Heart left ventricle (tissue), 16 donors: ENCODE measurements at regions of chr15 and their contacts with region 1.

Region 1: GRCh38 chr15:45118131-45118588 is 4.0 kb downstream of the DUOXA2 start:
- DNase-seq: peak; percentile 83 to 89 (median 87)
- ATAC-seq: peak; percentile 94 to 99 (median 96)
- H3K4me3 ChIP-seq: peak overlapping the region in 10 of 12 donors; percentile 2 to 49 (median 30)
- H3K27ac ChIP-seq: no peak overlapping the region
- H3K4me1 ChIP-seq: peaks cover 0 to 29% (median 15%) of the 10 kb centered on the region in 12 donors
- H3K27me3 ChIP-seq: peaks cover 30 to 92% (median 54%) of the 10 kb centered on the region in 9 donors
- CTCF ChIP-seq: peak; percentile 87 to 100 (median 97)
- POLR2A ChIP-seq: no peak

Region 2: DNA sequence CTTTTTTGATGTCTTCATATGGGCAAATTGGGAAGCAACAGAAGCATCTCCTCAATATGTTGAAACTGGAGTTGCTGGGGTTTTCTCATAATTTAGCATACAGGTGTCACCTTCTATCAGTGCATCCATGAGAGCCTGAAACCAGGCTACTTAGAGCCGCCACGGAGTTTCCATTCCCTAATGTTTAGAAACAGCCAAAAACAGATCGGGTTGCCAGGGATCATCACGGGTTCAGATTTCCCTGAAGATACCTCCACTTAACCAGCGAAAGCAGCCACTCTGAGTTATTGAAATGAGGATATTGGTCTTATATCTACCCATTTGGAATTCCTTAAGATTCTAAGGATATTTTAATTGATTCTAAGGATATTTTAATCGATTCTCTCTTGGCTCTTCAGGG is 147.1 kb before region 1 on chr15:
- intact Hi-C with region 1: loop called in 5 of 10 experiments (anchors 5 to 10 kb)
- DNase-seq: no peak
- ATAC-seq: no peak
- H3K4me3 ChIP-seq: no peak overlapping the region
- H3K27ac ChIP-seq: no peak overlapping the region
- H3K4me1 ChIP-seq: no peaks in the 10 kb centered on the region
- H3K27me3 ChIP-seq: peaks cover 0 to 10% (median 0%) of the 10 kb centered on the region in 9 donors
- CTCF ChIP-seq: no peak
- POLR2A ChIP-seq: no peak

Region 3: DNA sequence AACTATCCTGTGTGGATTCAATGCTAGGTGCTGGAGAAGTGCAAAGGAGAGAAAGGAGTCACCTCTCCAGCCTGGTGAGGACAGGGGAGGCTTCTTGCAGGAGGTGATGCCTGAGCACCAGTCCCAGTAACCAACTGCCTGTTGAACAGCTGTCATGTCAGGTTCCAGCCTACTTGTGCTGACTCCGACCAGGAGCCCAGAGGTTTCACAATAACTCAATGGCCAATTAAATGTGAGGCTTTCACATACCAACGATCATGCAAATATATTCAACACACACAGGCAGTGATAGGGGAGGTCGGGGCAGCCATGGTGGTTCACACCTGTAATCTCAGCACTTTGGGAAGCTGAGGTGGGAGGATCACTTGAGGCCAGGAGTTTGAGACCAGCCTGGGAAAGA is 87.4 kb before region 1 on chr15:
- intact Hi-C with region 1: loop called in 2 of 10 experiments (anchors 5 to 10 kb)
- DNase-seq: no peak
- ATAC-seq: no peak
- H3K4me3 ChIP-seq: no peak overlapping the region
- H3K27ac ChIP-seq: no peak overlapping the region
- H3K4me1 ChIP-seq: peaks cover 0 to 9% (median 0%) of the 10 kb centered on the region in 12 donors
- H3K27me3 ChIP-seq: no peaks in the 10 kb centered on the region
- CTCF ChIP-seq: no peak
- POLR2A ChIP-seq: no peak

Region 4: DNA sequence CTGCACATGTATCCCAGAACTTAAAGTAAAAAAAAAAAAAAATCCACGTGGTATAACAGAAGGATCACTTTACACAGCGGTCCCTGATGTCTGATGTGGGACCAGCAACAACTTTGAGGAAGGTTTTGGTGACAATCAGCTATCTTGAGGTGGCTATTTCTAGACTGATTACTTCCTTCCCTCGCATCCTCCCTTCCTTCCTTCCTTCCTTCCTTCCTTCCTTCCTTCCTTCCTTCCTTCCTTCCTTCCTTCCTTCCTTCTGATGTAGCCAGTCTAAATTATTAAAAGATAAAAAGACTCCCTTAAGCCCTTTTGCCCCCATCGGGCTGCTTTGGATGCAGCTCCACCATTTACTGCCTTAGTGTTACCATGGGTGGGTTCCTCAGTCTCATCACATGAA is 80.2 kb before region 1 on chr15:
- intact Hi-C with region 1: loop called in 2 of 10 experiments (anchors 5 to 10 kb)
- DNase-seq: no peak
- ATAC-seq: no peak
- H3K4me3 ChIP-seq: no peak overlapping the region
- H3K27ac ChIP-seq: no peak overlapping the region
- H3K4me1 ChIP-seq: peaks cover 0 to 6% (median 0%) of the 10 kb centered on the region in 12 donors
- H3K27me3 ChIP-seq: no peaks in the 10 kb centered on the region
- CTCF ChIP-seq: no peak
- POLR2A ChIP-seq: no peak

Region 5: DNA sequence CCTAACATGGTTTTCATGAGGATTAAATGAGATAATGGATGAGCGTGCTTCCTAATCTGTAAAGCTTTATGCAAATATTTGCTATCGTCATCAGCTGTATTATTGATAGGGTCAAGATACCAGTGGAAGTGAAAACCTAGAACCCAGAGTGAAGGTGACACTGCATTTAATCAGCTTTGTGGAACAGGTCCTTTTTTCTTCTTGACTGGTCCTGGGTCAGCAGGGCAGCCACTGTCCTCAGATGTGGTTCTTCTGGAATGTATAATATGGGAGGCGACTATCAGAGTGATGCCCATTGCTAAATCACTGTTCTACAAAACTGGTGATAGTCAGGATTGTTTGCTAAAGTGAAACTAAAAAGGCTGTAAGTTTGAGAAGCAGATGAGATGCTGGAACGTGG is 53.8 kb before region 1 on chr15:
- intact Hi-C with region 1: loop called in 1 of 10 experiments (anchors 10 kb)
- DNase-seq: no peak
- ATAC-seq: no peak
- H3K4me3 ChIP-seq: no peak overlapping the region
- H3K27ac ChIP-seq: no peak overlapping the region
- H3K4me1 ChIP-seq: peaks cover 0 to 14% (median 0%) of the 10 kb centered on the region in 12 donors
- H3K27me3 ChIP-seq: no peaks in the 10 kb centered on the region
- CTCF ChIP-seq: no peak
- POLR2A ChIP-seq: no peak

Region 6: GRCh38 chr15:45187894-45188830 is 70.0 kb after region 1 on chr15 and contains the start of gene SHF:
- intact Hi-C with region 1: no loop called
- DNase-seq: peak in 4 of 5 donors; percentile 61 to 79 (median 68)
- ATAC-seq: peak; percentile 62 to 83 (median 75)
- H3K4me3 ChIP-seq: peak within 1 kb of the TSS; percentile 55 to 87 (median 72)
- H3K27ac ChIP-seq: peak within 1 kb of the TSS; percentile 17 to 93 (median 66)
- H3K4me1 ChIP-seq: peaks cover 0 to 32% (median 9%) of the 10 kb centered on the region in 12 donors
- H3K27me3 ChIP-seq: peaks cover 0 to 10% (median 0%) of the 10 kb centered on the region in 9 donors
- CTCF ChIP-seq: no peak
- POLR2A ChIP-seq: peak in 1 of 2 donors; percentile 23
- total RNA-seq, gene SHF: 2.4 to 7.9 (median 3.9) TPM